Cardiac septum (tissue), 1 donor: ENCODE measurements at regions of chr9 and their contacts with region 1.

Region 1: GRCh38 chr9:35732122-35732799 is at the starts of genes CREB3 and TLN1:
- DNase-seq: peak; percentile 100
- total RNA-seq, gene CREB3: 25.0 TPM
- total RNA-seq, gene TLN1: 291 TPM

Region 2: GRCh38 chr9:35657546-35658136 is 74.6 kb before region 1 on chr9 and contains the start of gene RMRP:
- intact Hi-C with region 1: loop called (anchors 1 kb)
- DNase-seq: peak; percentile 96
- total RNA-seq, gene RMRP: 10,677 TPM

Region 3: DNA sequence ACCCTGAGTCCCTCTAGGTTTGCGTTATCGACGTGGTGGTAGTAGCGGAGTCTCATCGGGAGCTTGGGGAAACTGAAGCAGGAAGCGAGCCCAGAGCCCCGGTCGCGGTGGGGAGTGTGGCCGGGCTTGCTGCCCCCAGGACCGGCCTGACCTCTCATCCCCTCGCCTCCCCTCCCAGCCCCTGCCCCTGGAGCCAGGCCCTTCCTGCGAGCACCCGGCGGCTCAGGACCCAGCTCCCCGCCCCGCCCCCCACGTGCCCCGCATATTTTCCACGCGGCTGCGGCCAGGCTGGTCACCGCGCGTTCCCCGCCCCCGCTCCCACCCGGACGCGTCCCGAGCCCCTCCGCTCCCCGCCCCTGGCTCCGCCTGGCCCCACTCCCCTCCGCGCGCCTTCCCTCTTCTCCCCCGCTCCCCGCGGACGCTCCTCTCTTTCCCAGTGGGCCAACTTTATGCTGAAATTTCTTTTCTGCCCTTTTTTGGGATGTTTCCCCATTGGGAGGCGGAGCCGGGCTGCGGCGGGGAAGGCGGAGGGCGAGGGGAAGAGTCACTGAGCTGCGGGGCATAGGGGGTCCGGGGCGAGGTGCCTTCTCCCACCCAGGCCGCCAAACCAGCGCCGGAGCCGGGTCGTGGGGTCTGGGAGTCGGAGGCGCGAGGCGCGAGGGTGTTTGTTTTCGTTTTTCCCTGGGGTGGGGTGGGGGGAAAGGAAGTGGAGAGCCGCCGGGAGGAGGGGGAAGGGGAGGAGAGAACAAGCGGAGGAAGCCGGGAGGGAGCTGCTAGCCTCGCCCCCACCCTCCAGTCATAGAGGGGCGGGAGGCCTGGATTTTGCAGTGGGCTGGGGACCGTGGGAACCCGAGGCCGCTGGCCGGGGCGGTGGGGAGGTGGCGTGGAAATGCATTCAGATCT is 41.6 kb before region 1 on chr9:
- intact Hi-C with region 1: loop called (anchors 1 kb)
- DNase-seq: peak; percentile 88

Region 4: GRCh38 chr9:35748858-35749514 is 16.7 kb after region 1 on chr9 and contains the starts of genes GBA2 and RGP1:
- intact Hi-C with region 1: loop called (anchors 2 kb)
- DNase-seq: peak; percentile 96
- total RNA-seq, gene GBA2: 98.6 TPM
- total RNA-seq, gene RGP1: 40.0 TPM

Region 5: DNA sequence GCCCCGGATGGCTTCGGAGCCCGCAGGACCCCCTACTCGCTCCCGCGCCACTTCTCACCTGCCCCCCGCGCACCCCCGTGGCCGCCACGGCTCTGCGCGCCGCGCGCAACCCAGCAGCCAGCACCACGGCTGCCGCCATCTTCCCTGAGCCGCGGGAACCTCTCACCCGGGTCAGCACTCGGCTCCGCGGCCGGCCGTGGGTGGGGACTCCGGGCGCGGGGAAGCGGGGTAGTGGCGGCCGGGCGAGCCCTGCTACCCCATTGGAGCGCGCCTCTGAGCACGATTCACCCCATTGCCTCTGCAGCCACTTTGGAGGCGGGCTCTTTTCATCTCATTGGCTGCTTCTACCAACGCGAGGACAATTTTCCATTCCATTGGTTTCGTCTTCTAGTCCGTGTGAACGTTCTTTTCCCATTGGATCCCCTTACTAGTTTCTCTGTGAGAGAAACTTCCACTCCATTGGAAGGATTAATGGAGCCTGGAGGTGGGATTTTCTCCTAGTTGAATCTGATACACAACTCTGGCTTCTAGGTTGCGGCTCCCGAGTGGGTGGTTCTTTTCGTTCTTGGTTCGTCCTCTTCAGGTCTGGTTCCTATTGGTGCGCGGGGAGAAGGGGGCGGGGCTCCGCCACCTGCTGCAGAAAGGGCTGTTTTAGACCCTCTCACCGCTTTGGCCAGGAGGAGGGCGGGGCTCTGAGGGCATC is 82.7 kb after region 1 on chr9 and contains the start of gene HINT2:
- intact Hi-C with region 1: loop called (anchors 5 kb)
- DNase-seq: peak; percentile 96
- total RNA-seq, gene HINT2: 57.6 TPM